ENCODE measurements at regions of chr6 and their contacts with region 1.

Region 1: DNA sequence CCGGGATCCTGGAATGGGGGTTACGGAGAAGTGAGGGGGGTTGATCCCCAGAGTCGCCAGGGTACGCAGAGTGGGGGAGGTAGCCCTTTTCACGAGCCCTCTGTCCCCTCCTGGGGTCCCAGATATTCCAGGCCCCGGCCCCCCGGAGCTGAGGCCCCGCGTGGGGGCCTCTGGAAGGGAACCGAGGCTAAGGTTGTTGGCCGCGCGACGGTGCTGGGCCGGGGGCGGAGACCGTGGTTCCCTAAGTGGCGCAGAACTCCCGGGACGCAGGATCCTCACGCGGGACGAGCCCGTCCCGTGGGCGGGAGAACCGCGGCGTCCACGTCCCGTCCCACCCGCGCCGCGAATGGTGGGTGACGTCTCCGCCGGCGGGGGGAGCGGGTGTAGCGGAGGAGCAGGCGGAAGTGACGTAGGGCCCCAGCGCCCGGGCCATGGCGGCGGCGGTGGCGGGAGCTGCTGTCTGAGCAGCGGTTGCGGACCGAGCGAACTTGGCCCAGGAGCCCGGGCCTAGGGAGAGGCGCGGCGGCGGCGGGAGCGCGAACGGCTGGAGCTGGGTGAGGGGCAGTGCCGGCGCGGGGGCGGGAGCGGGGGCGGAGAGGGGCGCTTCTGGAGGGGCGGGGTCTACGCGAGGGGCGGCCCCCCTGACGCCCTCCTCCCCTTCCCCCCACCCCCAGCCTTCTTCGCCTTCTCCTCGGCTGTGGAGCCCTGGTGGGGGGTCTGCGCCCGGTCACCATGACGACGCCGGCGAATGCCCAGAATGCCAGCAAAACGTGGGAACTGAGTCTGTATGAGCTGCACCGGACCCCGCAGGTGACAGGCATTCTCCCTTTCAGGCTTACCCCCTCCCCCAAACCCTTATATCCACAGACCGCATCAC is at the start of gene RING1:
- DNase-seq: peak; percentile 76 to 95 (median 84)
- ATAC-seq: peak; percentile 66
- H3K4me3 ChIP-seq: peak within 1 kb of the TSS; percentile 97
- H3K4me3 Mint-ChIP-seq: peak within 1 kb of the TSS; percentile 97
- H3K27ac ChIP-seq: peak within 1 kb of the TSS; percentile 86 to 94
- H3K27ac Mint-ChIP-seq: peak within 1 kb of the TSS; percentile 95
- H3K4me1 ChIP-seq: peaks cover 55% of the 10 kb centered on the region
- H3K4me1 Mint-ChIP-seq: peaks cover 57% of the 10 kb centered on the region
- H3K27me3 ChIP-seq: peaks cover 0 to 6% of the 10 kb centered on the region in 2 experiments
- H3K27me3 Mint-ChIP-seq: peaks cover 13% of the 10 kb centered on the region
- CTCF ChIP-seq: no peak
- total RNA-seq, gene RING1: 27.1 to 28.6 TPM

Region 2: GRCh38 chr6:31252625-31253024 is 1955.7 kb before region 1 on chr6:
- CTCF ChIA-PET with region 1: no interaction called
- POLR2A ChIA-PET with region 1: no interaction called
- intact Hi-C with region 1: no loop called
- DNase-seq: peak in 2 of 14 experiments; percentile 4 to 23
- ATAC-seq: no peak
- H3K4me3 ChIP-seq: no peak overlapping the region
- H3K4me3 Mint-ChIP-seq: no peak overlapping the region
- H3K27ac ChIP-seq: no peak overlapping the region
- H3K27ac Mint-ChIP-seq: no peak overlapping the region
- H3K4me1 ChIP-seq: no peaks in the 10 kb centered on the region
- H3K4me1 Mint-ChIP-seq: no peaks in the 10 kb centered on the region
- H3K27me3 ChIP-seq: no peaks in the 10 kb centered on the region
- H3K27me3 Mint-ChIP-seq: peaks cover 18% of the 10 kb centered on the region
- CTCF ChIP-seq: no peak

Region 3: DNA sequence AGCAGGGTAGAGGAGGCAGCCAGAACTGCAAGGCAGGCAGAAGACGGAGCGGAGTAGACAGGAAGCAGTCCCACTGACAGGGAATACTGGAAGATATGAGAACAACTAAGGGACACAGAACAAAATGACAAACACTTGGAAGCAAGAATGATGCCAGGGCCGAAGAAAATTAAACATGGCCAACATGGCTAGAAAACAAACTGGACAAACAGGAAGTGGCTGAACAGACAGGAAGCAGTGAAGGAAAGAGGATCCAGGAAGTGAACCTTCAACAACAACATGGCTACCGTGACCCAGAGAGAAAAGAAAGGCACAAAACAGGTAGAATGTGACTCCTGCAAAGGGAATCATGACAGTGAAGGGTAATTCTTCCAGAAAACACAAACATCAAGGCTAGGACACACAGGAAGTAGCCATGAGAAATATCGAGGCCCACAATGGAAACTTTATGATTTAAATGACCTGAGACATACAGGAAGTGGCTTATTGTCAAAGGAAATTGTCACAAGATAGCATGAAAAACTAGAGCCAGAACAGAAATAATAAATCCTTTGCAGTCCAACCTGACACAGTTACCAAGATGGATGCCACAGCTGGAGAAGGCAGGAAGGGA is 25.2 kb before region 1 on chr6:
- CTCF ChIA-PET with region 1: no interaction called
- POLR2A ChIA-PET with region 1: interaction called, 18 read pairs
- intact Hi-C with region 1: no loop called
- DNase-seq: peak in 2 of 14 experiments; percentile 18 to 59
- ATAC-seq: peak; percentile 63
- H3K4me3 ChIP-seq: no peak overlapping the region
- H3K4me3 Mint-ChIP-seq: peak overlapping the region; percentile 68
- H3K27ac ChIP-seq: no peak overlapping the region
- H3K27ac Mint-ChIP-seq: peak overlapping the region; percentile 83
- H3K4me1 ChIP-seq: peaks cover 24% of the 10 kb centered on the region
- H3K4me1 Mint-ChIP-seq: peaks cover 25% of the 10 kb centered on the region
- H3K27me3 ChIP-seq: no peaks in the 10 kb centered on the region
- H3K27me3 Mint-ChIP-seq: peaks cover 20% of the 10 kb centered on the region
- CTCF ChIP-seq: no peak